ENCODE measurements at regions of chr20 and their contacts with region 1.

Region 1: GRCh38 chr20:31951530-31952453 is at the start of gene PDRG1:
- DNase-seq: peak; percentile 82 to 99 (median 90)

Region 2: DNA sequence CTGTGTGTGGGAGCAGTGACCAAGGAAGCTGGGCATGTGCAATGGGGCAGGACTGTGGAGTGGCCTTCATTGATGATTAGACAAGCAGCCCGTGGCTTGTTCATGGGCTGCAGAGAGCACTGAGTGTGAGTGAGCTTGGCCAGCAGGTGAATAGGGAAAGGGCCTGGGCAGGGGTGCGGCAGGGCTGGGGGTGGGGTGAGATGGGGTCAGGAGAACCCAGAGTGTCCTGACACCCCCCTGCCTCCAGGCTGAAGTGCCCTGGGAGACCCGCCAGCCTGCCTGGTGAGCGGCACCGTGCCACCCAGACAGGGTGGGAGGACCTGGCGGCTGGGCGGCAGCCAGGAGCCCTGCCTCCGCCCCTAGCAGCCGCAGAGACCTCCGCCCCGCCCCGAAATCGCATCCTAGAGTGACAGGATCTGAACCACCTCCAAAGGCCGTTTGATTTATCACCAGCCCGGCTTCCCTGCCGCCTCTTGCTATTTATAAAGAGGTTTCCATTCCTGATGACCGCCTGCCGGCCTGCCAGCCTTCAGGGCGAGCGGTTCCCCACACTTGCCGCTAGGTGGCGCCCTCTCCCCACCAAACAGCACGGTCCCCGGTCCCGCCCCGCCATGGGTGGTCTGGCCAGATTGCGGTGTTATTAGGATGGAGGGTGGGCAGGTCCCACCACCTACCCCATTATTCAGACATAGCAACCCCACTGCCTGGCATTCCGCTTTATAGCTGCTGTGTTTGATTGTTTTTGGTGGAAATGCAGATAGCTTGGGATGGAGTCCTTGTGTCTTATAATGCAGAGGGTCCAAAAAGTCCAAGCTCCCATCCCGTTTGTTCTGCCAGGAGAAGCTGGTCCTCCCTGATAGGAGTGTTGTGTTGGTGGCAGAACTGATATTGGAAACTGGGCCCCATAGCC is 129.1 kb before region 1 on chr20:
- intact Hi-C with region 1: loop called (anchors 1 kb)
- DNase-seq: peak; percentile 46 to 96 (median 78)

Region 3: GRCh38 chr20:31849455-31849925 is 102.3 kb before region 1 on chr20:
- intact Hi-C with region 1: loop called (anchors 1 kb)
- DNase-seq: no peak

Region 4: GRCh38 chr20:31869942-31870725 is 81.7 kb before region 1 on chr20 and contains the starts of genes DUSP15 and TTLL9:
- intact Hi-C with region 1: loop called (anchors 5 kb)
- DNase-seq: peak; percentile 58 to 96 (median 71)

Region 5: DNA sequence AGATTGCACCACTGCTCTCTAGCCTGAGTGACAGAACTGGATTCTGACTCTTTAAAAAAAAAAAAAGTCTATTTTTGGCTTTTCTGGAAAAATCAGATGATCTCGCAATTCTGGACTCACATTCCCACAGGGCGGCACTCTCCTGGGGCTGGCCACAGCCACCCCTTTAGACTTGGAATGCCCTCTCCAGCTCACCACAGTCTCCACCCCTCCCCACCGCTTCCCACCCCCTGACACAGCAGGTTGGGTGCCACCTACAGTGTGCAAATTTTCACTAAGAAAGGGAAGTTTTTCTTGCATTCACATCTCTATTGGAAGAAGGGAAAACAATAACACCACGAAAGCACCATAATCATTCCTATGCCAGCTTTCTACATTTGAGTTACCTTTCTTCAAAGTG is 15.4 kb before region 1 on chr20:
- intact Hi-C with region 1: no loop called
- DNase-seq: no peak

Region 6: GRCh38 chr20:31968291-31969126 is 16.7 kb after region 1 on chr20:
- intact Hi-C with region 1: loop called (anchors 1 kb)
- DNase-seq: peak; percentile 45 to 93 (median 66)

Region 7: GRCh38 chr20:32031007-32031958 is 79.5 kb after region 1 on chr20:
- intact Hi-C with region 1: loop called (anchors 5 kb)
- DNase-seq: peak; percentile 56 to 94 (median 74)

Region 8: GRCh38 chr20:32109392-32110172 is 157.8 kb after region 1 on chr20 and contains the start of gene TM9SF4:
- intact Hi-C with region 1: loop called (anchors 10 kb)
- DNase-seq: peak; percentile 84 to 98 (median 94)

Measured in posterior cingulate gyrus (tissue), 11 donors.